ENCODE measurements at regions of chrX and their contacts with region 1.

Region 1: GRCh38 chrX:139559383-139560042 is 29.0 kb downstream of the F9 start:
- DNase-seq: peak; percentile 4 to 64 (median 18)
- ATAC-seq: peak; percentile 88
- H3K4me3 ChIP-seq: no peak overlapping the region
- H3K27ac ChIP-seq: no peak overlapping the region
- H3K4me1 ChIP-seq: no peaks in the 10 kb centered on the region
- H3K27me3 ChIP-seq: peaks cover 2 to 17% of the 10 kb centered on the region in 2 experiments; a peak in 3 of 5 replicates
- CTCF ChIP-seq: peak; percentile 42 to 66 (median 57); a peak in 5 of 6 replicates
- EP300 ChIP-seq: no peak
- POLR2A ChIP-seq: no peak
- RAD21 ChIP-seq: peak; percentile 66 to 78

Region 2: GRCh38 chrX:138756234-138756633 is 803.3 kb before region 1 on chrX:
- CTCF ChIA-PET with region 1: no interaction called
- POLR2A ChIA-PET with region 1: no interaction called
- in situ Hi-C with region 1: loop called (anchors 25 kb)
- intact Hi-C with region 1: no loop called
- DNase-seq: peak in 2 of 4 experiments; percentile 8
- ATAC-seq: peak; percentile 72
- H3K4me3 ChIP-seq: no peak overlapping the region
- H3K27ac ChIP-seq: no peak overlapping the region
- H3K4me1 ChIP-seq: no peaks in the 10 kb centered on the region
- H3K27me3 ChIP-seq: no peaks in the 10 kb centered on the region
- CTCF ChIP-seq: no peak
- EP300 ChIP-seq: no peak
- POLR2A ChIP-seq: no peak
- RAD21 ChIP-seq: peak in 1 of 2 experiments; percentile 22; a peak in 1 of 4 replicates